Activated CD8-positive, alpha-beta memory T cell treated with anti-CD3 and anti-CD28 coated beads, Interleukin-2, amount 10 ng/mL, durations not matched to agents 7 days and 5 days (primary cell): ENCODE measurements at regions of chr14 and their contacts with region 1.

Region 1: DNA sequence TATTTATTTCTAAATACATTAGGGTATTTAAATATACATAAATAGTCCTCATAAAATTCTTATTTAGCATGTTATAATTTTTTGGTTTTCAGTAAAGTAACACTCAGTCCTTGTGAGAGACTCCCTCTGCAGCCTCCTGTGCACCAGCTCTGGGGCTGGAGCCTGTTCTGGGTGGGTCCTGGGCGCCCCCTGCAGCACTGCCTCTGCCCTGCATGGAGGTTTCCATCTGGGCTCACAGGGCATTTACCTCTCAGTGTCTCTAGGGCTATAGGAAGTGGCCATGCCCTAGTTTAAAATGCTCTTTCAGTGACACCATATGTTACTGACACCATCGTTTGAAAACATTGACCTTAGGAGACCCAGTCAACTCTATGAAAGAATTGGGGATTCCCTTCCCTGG is 1155.2 kb downstream of the TMEM121 start:
- DNase-seq: no peak
- ATAC-seq: peak; percentile 78
- H3K4me3 Mint-ChIP-seq: no peak overlapping the region
- H3K27ac Mint-ChIP-seq: no peak overlapping the region
- H3K4me1 Mint-ChIP-seq: no peaks in the 10 kb centered on the region
- H3K27me3 Mint-ChIP-seq: peaks cover 69% of the 10 kb centered on the region

Region 2: DNA sequence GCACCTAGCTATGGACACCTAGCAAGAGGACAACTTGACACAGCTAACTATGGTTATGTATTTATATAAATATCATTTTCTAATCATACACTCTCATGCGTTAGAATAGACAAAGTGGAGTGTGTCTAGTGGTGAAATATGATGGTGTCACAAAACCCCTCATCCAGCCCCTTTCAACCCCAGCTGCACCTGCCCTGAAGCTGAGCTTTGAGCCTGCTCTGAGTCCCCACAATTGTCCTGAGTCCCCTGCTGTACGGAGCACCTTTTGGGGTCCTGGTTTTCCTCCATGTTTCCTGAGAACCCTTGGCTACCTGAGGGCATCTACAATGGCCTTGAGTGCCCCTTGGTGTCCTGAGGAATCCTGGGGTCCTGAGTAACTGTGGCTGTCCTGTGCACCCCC is 82.4 kb before region 1 on chr14:
- CTCF ChIA-PET with region 1: no interaction called
- DNase-seq: no peak
- ATAC-seq: no peak
- H3K4me3 Mint-ChIP-seq: no peak overlapping the region
- H3K27ac Mint-ChIP-seq: no peak overlapping the region
- H3K4me1 Mint-ChIP-seq: no peaks in the 10 kb centered on the region
- H3K27me3 Mint-ChIP-seq: peaks cover 88% of the 10 kb centered on the region

Region 3: DNA sequence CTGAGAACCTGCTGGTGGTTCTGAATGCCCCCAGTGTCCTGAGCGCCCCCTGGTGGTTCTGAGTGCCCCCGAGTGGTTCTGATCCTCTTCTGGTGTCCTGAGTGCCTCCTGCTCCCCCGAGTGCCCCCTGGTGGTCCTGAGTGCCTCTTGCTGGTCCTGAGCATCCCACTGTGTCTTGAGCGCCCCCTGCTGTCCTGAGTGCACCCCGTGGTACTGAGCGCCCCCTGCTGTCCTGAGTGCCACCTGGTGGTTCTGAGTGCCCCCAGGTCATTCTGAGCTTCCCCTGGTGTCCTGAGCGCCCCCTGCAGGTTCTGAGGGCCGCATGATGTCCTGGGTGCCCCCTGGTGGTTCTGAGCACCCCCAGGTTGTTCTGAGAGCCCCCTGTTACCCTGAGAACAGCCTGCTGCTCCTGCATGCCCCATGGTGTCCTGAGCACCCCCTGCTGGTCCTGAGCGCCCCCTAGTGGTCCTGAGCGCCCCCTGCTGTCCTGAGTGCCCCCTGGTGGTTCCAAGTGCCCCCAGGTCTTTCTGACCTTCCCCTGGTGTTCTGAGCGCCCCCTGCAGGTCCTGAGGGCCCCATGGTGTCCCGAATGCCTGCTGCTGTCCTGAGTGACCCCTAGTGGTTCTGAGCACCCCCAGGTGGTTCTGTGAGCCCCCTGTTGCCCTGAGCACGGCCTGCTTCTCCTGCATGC is 10.2 kb after region 1 on chr14:
- CTCF ChIA-PET with region 1: interaction called, 12 read pairs
- DNase-seq: peak; percentile 88
- ATAC-seq: peak; percentile 61
- H3K4me3 Mint-ChIP-seq: no peak overlapping the region
- H3K27ac Mint-ChIP-seq: no peak overlapping the region
- H3K4me1 Mint-ChIP-seq: peaks cover 18% of the 10 kb centered on the region
- H3K27me3 Mint-ChIP-seq: peaks cover 17% of the 10 kb centered on the region

Region 4: GRCh38 chr14:106738075-106738474 is 56.5 kb after region 1 on chr14:
- CTCF ChIA-PET with region 1: no interaction called
- DNase-seq: no peak
- ATAC-seq: no peak
- H3K4me3 Mint-ChIP-seq: no peak overlapping the region
- H3K27ac Mint-ChIP-seq: no peak overlapping the region
- H3K4me1 Mint-ChIP-seq: peaks cover 6% of the 10 kb centered on the region
- H3K27me3 Mint-ChIP-seq: peaks cover 18% of the 10 kb centered on the region